Common myeloid progenitor, CD34-positive (primary cell): ENCODE measurements at regions of chr7 and their contacts with region 1.

Region 1: DNA sequence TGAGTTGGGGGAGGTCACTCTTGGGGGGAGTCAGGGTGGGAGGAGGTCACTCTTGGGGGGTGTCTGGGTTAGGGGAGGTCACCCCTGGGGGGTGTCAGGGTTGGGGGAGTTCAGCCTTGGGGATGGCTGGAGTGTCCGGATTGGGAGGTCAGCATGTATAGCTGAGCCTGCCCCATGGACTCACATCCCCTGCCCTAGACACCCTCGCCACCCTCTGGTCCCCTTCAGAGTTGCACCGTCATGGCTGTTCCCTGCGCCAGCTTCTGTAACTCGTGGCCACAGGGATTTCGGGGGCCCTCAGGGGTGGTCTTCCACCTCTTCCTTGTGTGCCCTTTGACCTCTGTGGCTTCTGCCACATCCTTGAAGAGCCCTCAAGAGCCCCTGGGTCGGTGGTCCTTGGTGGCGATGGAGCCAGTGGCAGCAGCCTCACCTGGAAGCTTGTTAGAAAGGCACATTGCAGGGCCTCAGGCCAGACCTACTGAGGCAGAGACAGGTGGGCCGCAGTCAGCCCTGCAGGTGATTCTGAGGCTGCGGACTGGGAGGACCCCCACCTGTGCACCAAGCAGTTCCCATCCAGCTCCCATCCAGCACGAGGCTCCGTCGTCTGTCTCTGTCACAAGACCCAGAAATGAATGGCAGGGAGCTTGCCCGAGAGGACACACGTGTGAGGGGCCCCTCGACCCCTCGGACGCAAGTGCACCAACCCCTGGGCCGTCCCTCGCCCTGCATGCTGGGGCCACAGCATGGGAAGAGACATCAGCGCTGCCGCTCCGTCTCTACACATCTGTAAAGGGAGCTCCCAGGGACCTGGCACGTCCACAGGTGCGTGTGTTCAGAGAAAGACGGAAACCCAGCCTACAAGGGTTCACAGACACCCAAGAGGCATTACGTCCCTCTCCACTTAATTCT is 44.7 kb upstream of the SUN1 start:
- DNase-seq: no peak
- H3K4me3 ChIP-seq: no peak overlapping the region
- H3K27ac ChIP-seq: no peak overlapping the region
- H3K4me1 ChIP-seq: no peaks in the 10 kb centered on the region
- H3K27me3 ChIP-seq: no peaks in the 10 kb centered on the region

Region 2: DNA sequence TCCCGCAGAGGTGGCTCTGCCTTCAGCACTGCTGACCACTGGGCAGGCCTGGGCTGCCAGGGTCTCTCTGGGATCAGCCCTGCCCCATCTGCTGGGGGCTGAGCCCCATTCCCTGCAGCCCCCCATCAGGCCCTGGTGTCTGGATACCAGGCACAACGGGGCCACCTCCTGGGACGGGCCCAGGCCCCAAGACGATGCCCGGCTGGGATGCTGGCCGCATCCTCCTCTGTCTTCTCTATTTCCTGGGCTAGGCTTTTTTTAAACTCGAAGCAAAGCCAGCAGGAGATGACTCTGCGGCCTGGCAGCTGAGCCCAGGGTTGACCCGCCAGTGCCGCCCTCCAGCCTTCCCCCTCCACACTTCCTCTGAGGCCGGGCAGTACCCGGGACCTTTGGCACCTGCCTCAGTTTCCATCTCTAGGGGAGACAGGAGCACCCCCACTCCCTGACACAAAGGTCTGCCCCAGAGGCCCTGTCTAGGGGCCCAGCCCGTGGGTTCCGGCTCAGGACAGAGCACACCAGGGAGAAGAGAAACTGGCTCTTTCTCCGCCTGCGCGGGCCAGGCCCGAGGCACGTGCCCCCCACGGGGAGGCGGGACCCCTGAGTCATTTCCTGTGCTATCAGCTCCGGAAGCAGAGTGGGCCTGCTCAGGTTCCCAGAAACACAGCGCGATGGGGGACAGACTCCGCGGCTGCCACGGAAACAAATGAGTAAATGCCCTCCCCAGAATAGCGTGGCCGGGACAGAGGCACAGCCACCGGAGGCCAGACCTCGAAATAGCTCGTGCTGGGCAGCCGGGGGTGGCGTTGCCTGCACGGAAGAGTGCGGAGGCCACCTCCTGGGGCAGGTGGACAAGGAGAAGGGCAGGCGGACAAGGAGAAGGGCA is 183.3 kb before region 1 on chr7:
- CTCF ChIA-PET with region 1: no interaction called
- POLR2A ChIA-PET with region 1: no interaction called
- DNase-seq: peak; percentile 96 to 99 (median 99)
- H3K4me3 ChIP-seq: peak overlapping the region in 4 of 7 experiments; percentile 22 to 60 (median 44)
- H3K27ac ChIP-seq: peak overlapping the region; percentile 96
- H3K4me1 ChIP-seq: peaks cover 0 to 77% (median 68%) of the 10 kb centered on the region in 4 experiments
- H3K27me3 ChIP-seq: no peaks in the 10 kb centered on the region

Region 3: DNA sequence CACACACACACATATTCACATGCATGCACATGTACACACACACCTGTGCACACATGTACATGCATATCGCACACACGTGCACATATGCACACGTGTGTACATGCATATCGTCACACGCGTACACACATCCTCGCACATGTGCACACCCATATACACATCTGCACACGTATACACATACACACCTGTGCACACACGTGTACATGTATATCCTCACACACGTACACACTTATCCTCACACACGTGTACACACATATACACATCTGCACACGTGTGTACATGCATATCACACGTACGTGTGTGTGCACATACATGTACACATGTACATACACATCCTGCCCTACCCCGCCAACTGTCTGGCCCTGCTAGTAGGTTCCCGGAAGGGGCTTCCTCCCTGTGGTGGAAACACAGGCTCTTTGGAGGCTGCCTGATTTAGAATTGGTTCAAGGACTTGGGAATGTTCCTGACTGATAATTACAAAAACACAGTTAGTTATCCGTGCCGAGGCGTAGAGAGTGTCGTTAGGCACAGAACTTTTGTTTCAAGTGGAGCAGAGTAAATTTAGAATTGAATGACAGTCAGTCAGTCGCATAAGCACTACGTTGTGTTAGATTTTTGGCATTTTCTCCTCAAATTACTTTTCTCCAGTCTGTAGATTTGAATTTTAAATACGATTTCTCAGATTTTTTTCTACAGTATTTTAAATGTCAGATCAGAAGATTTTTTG is 42.0 kb before region 1 on chr7:
- CTCF ChIA-PET with region 1: no interaction called
- POLR2A ChIA-PET with region 1: no interaction called
- DNase-seq: no peak
- H3K4me3 ChIP-seq: no peak overlapping the region
- H3K27ac ChIP-seq: no peak overlapping the region
- H3K4me1 ChIP-seq: no peaks in the 10 kb centered on the region
- H3K27me3 ChIP-seq: no peaks in the 10 kb centered on the region

Region 4: DNA sequence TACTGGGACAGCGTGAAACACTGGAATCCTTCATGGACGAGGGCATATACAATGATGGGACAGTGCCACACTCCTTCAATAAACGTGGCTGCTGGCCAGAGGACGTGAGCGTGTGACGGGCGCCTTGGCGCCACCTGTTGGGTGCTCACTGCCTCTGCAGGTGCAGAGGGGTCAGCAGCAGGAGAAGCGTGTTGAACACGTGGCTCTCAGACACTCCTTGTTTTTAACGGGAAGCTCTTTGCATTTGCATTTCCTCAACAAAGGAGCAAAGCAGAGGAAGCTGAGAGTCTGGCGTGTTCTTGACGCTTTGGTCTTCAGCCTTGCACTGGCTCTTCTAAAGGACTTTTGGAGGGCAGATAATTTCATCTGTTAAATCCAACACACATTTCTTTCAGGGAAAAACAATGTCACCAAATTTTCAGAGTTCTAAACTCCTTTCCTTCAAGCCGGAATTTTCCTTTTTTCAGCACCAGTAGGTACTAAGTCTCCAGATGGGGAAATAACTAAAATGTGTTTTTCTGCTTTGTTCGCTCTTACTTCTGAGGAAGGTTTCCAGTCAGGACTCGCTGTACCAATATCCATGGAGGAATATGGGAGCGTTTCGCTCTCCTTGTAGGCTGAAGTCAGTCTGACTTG is 85.9 kb after region 1 on chr7:
- CTCF ChIA-PET with region 1: interaction called, 15 read pairs
- POLR2A ChIA-PET with region 1: no interaction called
- DNase-seq: peak; percentile 80 to 83 (median 81)
- H3K4me3 ChIP-seq: no peak overlapping the region
- H3K27ac ChIP-seq: peak overlapping the region in 1 of 2 experiments; percentile 60
- H3K4me1 ChIP-seq: peaks cover 2 to 25% (median 19%) of the 10 kb centered on the region in 4 experiments
- H3K27me3 ChIP-seq: no peaks in the 10 kb centered on the region